H1 (cell line): ENCODE measurements at regions of chr9 and their contacts with region 1.

Region 1: DNA sequence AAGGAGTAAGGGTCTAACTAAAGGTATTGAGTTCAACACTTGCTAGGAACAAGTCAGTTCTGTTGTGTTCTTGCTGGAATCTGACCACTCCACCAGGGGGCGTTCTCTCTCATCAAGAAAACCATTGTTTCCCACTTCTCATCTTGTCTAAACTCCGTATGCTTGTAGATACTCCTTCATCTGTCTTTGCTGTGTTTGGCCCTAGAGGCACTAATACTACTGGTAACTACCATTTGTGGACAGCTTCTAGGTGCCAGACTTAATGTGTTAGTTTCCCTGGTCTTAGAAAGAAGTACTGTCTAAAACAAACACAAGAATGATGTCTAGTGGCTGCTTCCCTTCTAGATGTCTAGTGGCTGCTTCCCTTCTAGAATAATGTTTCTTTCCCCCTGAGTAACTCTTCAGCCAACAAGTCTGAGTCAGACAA is 18.7 kb upstream of the PTPDC1 start:
- DNase-seq: peak; percentile 60 to 82
- H3K4me3 ChIP-seq: no peak overlapping the region
- H3K27ac ChIP-seq: no peak overlapping the region
- H3K4me1 ChIP-seq: peaks cover 0 to 2% (median 0%) of the 10 kb centered on the region in 4 experiments; a peak in 2 of 7 replicates
- H3K27me3 ChIP-seq: no peaks in the 10 kb centered on the region
- CTCF ChIP-seq: peak in 2 of 3 experiments; percentile 73 to 87; a peak in 3 of 4 replicates
- EP300 ChIP-seq: no peak
- POLR2A ChIP-seq: no peak
- RAD21 ChIP-seq: peak; percentile 82 to 87

Region 2: DNA sequence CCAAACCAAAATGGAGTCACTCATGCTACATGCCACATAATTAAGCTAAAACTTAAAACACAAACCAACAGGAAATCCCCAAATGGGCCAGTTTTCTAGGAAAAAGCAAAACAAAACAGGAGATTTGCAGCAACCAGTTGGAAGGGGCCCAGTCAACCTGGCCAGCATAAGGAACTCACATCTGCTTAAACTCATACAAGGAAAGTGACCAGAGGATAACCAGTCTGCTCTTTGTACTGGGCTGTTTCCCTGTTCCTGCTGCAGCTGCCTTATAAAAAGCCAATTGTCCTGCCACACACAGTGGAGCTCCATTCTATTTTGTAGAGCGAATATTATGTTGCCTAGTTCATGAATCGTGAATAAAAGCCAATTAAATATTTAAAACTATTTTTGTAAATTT is 10.8 kb before region 1 on chr9:
- CTCF ChIA-PET with region 1: interaction called, 11 read pairs
- POLR2A ChIA-PET with region 1: no interaction called
- DNase-seq: no peak
- H3K4me3 ChIP-seq: no peak overlapping the region
- H3K27ac ChIP-seq: no peak overlapping the region
- H3K4me1 ChIP-seq: no peaks in the 10 kb centered on the region
- H3K27me3 ChIP-seq: no peaks in the 10 kb centered on the region
- CTCF ChIP-seq: no peak
- EP300 ChIP-seq: no peak
- POLR2A ChIP-seq: no peak
- RAD21 ChIP-seq: no peak

Region 3: GRCh38 chr9:94076557-94076956 is 11.0 kb after region 1 on chr9:
- CTCF ChIA-PET with region 1: interaction called, 10 read pairs
- POLR2A ChIA-PET with region 1: no interaction called
- DNase-seq: no peak
- H3K4me3 ChIP-seq: no peak overlapping the region
- H3K27ac ChIP-seq: no peak overlapping the region
- H3K4me1 ChIP-seq: no peaks in the 10 kb centered on the region
- H3K27me3 ChIP-seq: no peaks in the 10 kb centered on the region
- CTCF ChIP-seq: no peak
- EP300 ChIP-seq: no peak
- POLR2A ChIP-seq: no peak
- RAD21 ChIP-seq: no peak

Region 4: DNA sequence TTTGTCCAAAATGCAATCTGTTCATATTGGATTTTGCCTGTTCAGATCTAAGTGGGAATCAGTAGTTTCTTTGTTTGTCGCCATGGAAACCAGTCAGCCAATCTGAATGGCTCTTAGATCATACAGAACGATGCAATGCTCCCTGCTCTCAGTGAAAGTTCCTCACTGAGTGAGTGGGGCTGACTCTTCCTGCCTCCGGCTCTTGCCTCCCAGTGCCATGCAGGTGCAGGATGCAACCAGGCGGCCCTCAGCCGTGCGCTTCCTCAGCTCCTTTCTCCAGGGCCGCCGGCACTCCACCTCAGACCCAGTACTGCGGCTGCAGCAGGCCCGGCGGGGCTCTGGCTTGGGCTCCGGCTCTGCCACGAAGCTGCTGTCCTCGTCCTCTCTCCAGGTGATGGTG is 18.8 kb after region 1 on chr9 and contains the start of gene PTPDC1:
- CTCF ChIA-PET with region 1: interaction called, 12 read pairs
- POLR2A ChIA-PET with region 1: interaction called, 7 read pairs
- DNase-seq: peak; percentile 47 to 77
- H3K4me3 ChIP-seq: peak within 1 kb of the TSS in 1 of 4 experiments; percentile 48; a peak in 2 of 8 replicates
- H3K27ac ChIP-seq: no peak within 1 kb of the TSS
- H3K4me1 ChIP-seq: peaks cover 0 to 5% (median 1%) of the 10 kb centered on the region in 4 experiments; a peak in 2 of 7 replicates
- H3K27me3 ChIP-seq: no peaks in the 10 kb centered on the region
- CTCF ChIP-seq: no peak
- EP300 ChIP-seq: no peak
- POLR2A ChIP-seq: peak in 1 of 2 experiments; percentile 63; a peak in 1 of 3 replicates
- RAD21 ChIP-seq: no peak; a peak in 1 of 4 replicates
- total RNA-seq, gene PTPDC1: 6.9 and 7.3 TPM in 2 replicates

Region 5: GRCh38 chr9:94120854-94121376 is 55.4 kb after region 1 on chr9:
- CTCF ChIA-PET with region 1: no interaction called
- POLR2A ChIA-PET with region 1: no interaction called
- DNase-seq: no peak
- H3K4me3 ChIP-seq: no peak overlapping the region
- H3K27ac ChIP-seq: no peak overlapping the region
- H3K4me1 ChIP-seq: 0 out of 7 replicates have a peak, but pooled peaks cover 0 to 2% (median 0%) of the 10 kb centered on the region in 4 experiments
- H3K27me3 ChIP-seq: no peaks in the 10 kb centered on the region
- CTCF ChIP-seq: no peak
- EP300 ChIP-seq: no peak
- POLR2A ChIP-seq: no peak
- RAD21 ChIP-seq: no peak